ENCODE measurements at regions of chrX and their contacts with region 1.

Region 1: DNA sequence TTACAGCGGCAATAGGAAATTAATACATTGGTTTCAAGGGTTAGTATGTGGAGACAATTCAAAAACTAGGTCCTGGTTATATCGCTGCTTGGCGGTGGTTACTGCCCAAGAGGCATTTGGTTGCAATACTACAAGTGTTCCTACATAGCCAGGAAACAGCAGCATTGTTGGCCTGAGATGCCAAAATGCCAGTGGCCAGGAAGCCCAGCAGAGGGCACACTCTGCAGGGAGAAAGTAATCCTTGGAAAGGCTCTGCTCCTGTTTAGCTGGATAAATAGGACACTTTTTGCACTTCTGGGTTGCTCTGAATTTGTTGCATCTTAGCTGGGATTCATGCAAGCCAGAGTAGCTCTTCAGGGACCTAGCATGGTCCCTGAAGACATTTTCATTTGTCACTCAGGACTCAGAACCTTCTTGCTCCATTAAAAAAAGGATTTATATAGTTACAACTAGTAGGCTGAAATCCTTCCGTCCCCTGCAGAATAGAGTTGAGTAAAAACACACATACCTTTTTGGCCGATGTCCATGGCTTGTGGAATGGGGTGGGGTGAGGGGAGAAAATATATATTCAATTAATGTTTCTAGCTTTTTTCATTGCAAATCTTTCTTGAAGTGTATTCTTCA is 8.1 kb upstream of the GPR119 start:
- DNase-seq: peak in 3 of 4 experiments; percentile 10 to 57 (median 49)
- ATAC-seq: peak; percentile 74
- H3K4me3 ChIP-seq: no peak overlapping the region
- H3K27ac ChIP-seq: no peak overlapping the region
- H3K4me1 ChIP-seq: no peaks in the 10 kb centered on the region; a peak in 1 of 5 replicates
- H3K27me3 ChIP-seq: peaks cover 0 to 5% of the 10 kb centered on the region in 2 experiments; a peak in 2 of 5 replicates
- CTCF ChIP-seq: peak; percentile 66 to 69 (median 66)
- EP300 ChIP-seq: no peak
- POLR2A ChIP-seq: no peak
- RAD21 ChIP-seq: peak; percentile 59 to 77

Region 2: DNA sequence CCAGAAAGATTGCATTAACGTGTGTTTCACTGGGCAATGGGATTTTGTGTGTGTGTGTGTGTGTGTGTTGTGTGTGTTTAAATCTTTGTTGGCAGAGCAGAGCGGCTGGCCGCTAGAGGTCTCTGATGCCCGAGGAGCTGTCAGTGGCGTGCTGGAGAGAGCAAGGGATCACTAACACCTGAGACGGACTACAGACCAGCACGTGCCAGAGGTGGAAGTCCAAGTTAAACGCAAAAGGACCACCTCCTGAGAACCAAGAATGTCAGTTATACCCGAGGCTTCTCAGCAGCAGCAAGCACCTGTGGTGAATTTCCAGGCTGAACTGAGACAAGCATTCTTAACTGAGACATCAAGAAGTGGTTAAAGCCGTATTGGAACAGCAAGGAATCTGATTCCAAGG is 62.9 kb before region 1 on chrX:
- CTCF ChIA-PET with region 1: no interaction called
- POLR2A ChIA-PET with region 1: no interaction called
- in situ Hi-C with region 1: no loop called
- intact Hi-C with region 1: loop called (anchors 5 kb)
- DNase-seq: peak; percentile 47 to 78 (median 56)
- ATAC-seq: peak; percentile 98
- H3K4me3 ChIP-seq: no peak overlapping the region
- H3K27ac ChIP-seq: no peak overlapping the region
- H3K4me1 ChIP-seq: peaks cover 0 to 2% of the 10 kb centered on the region in 2 experiments; a peak in 2 of 5 replicates
- H3K27me3 ChIP-seq: no peaks in the 10 kb centered on the region
- CTCF ChIP-seq: peak; percentile 70 to 77 (median 74)
- EP300 ChIP-seq: no peak
- POLR2A ChIP-seq: no peak
- RAD21 ChIP-seq: peak; percentile 64 to 81

Region 3: DNA sequence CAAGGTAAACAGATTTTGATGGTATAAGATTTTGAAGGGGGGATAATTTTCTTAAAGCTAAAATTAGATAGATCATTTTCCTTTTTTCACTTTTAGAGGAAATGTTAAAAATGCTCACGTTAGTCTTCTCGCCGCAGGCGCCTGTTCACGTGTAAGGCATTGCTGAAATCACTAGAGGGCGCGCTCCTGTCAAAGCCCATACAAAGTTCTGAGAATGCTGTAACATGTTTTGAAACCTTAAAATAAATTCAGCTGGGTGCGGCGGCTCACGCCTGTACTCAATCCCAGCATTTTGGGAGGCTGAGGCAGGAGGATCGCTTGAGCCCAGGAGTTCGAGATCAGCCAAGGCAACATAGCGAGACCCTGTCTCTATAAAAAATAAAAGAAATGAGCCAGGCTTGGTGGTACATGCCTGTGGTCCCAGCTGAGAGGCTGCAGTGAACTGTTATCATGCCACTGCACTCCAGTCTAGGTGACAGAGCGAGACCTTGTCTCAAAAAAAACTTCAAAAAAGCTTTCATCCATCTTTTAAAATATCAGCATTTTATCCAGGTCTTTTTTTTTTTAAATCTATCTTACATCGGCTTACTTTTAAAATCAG is 146.3 kb after region 1 on chrX:
- CTCF ChIA-PET with region 1: no interaction called
- POLR2A ChIA-PET with region 1: no interaction called
- in situ Hi-C with region 1: no loop called
- intact Hi-C with region 1: loop called (anchors 5 kb)
- DNase-seq: peak; percentile 43 to 76 (median 46)
- ATAC-seq: peak; percentile 87
- H3K4me3 ChIP-seq: no peak overlapping the region
- H3K27ac ChIP-seq: no peak overlapping the region
- H3K4me1 ChIP-seq: no peaks in the 10 kb centered on the region; a peak in 1 of 5 replicates
- H3K27me3 ChIP-seq: peaks cover 0 to 6% of the 10 kb centered on the region in 2 experiments; a peak in 1 of 5 replicates
- CTCF ChIP-seq: peak; percentile 71 to 75 (median 73)
- EP300 ChIP-seq: no peak
- POLR2A ChIP-seq: no peak
- RAD21 ChIP-seq: peak; percentile 54 to 74

Measured in K562 (cell line).